Mammary epithelial cell (primary cell): ENCODE measurements at regions of chr3 and their contacts with region 1.

Region 1: GRCh38 chr3:183766745-183767606 is 58.4 kb downstream of the MAP6D1 start:
- DNase-seq: peak; percentile 68
- H3K4me3 ChIP-seq: no peak overlapping the region
- H3K27ac ChIP-seq: no peak overlapping the region
- H3K4me1 ChIP-seq: peaks cover 16% of the 10 kb centered on the region
- H3K27me3 ChIP-seq: no peaks in the 10 kb centered on the region
- CTCF ChIP-seq: peak; percentile 60 to 82

Region 2: DNA sequence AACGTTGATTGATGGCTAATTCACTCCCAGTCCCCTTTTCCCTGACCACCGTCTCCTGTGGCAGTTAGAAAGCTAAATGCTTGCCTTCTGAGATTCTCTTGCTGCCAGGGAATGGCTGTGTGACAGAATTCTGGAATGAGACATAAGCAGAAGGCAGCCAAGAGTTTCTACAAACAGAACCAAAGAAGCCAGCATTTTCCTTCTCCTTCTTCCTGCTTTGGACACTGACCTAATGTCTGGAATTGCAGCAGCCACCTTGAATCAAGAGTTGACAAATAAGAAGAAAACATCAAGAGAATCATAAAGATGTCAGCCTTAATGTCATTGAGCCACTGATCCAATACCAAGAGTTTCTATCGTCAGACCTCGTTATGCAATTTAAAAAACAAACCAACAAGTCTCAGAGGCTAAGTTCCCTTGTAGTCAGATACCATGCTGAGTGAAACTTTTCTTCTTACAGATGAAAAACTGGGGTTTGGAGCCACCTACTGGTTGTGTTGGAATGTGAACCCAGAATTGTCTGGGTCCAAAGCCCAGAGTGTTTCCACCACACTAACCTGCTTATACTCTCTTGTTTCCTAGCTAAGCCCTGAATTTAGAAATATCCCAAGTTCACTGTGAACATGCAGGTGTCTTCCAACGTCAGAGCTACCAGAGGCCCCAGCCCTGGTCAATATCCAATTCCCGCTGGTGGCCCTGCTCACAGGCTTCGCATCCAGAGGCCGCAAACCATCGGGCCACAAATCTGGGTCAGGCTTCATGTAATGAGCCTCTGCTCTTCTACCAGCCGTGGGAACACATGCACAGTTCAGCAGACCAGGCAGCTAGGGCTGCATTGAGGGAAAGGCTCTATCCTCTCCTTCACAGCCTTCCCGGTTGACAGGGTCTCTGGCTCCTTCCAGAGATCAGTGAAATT is 381.0 kb before region 1 on chr3:
- CTCF ChIA-PET with region 1: no interaction called
- dilution Hi-C with region 1: no loop called
- in situ Hi-C with region 1: no loop called
- intact Hi-C with region 1: loop called (anchors 5 kb)
- DNase-seq: peak; percentile 59
- H3K4me3 ChIP-seq: no peak overlapping the region
- H3K27ac ChIP-seq: no peak overlapping the region
- H3K4me1 ChIP-seq: peaks cover 8% of the 10 kb centered on the region
- H3K27me3 ChIP-seq: no peaks in the 10 kb centered on the region
- CTCF ChIP-seq: peak; percentile 72 to 80

Region 3: DNA sequence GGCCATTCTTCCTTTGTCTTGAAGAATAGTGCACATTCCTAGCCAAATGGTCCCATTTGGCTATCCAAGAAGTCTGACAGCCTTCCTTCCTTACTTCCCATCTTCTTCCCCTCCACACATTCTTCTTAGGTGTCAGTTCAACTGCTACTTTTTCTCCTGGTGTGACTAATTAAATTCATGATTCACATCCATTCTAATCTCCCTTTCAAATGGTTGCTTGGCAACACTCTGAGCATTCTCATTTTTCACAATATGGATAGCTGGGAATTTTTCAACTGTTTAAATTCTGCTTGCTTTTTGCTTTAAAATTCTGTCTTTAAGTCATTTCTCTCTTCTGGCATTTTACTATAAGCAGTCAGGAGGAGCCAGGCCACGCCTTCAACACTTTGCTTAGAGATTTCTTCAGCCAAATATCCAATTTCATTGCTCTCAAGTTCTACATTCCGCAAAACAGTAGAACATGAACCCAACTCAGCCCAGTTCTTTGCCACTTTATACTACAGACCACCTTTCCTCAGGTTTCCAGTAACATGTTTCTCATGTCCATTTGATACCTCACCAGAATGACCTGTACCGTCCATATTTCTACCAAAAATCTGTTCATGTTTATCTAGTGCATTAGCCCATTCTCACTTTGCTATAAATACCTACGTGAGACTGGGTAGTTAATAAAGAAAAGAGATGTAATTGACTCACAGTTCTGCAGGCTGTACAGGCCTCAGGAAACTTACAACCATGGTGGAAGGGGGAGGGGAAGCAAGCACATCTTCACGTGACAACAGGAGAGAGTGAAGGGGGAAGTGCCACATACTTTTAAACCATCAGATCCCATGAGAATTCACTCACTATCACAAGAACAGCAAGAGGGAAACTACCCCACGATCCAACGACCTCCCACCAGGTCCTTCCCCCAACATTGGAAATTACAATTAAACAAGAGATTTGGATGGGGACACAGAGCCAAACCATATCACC is 306.6 kb before region 1 on chr3:
- CTCF ChIA-PET with region 1: no interaction called
- dilution Hi-C with region 1: no loop called
- in situ Hi-C with region 1: loop called (anchors 5 to 10 kb)
- intact Hi-C with region 1: no loop called
- DNase-seq: peak; percentile 49
- H3K4me3 ChIP-seq: no peak overlapping the region
- H3K27ac ChIP-seq: no peak overlapping the region
- H3K4me1 ChIP-seq: peaks cover 6% of the 10 kb centered on the region
- H3K27me3 ChIP-seq: no peaks in the 10 kb centered on the region
- CTCF ChIP-seq: no peak

Region 4: DNA sequence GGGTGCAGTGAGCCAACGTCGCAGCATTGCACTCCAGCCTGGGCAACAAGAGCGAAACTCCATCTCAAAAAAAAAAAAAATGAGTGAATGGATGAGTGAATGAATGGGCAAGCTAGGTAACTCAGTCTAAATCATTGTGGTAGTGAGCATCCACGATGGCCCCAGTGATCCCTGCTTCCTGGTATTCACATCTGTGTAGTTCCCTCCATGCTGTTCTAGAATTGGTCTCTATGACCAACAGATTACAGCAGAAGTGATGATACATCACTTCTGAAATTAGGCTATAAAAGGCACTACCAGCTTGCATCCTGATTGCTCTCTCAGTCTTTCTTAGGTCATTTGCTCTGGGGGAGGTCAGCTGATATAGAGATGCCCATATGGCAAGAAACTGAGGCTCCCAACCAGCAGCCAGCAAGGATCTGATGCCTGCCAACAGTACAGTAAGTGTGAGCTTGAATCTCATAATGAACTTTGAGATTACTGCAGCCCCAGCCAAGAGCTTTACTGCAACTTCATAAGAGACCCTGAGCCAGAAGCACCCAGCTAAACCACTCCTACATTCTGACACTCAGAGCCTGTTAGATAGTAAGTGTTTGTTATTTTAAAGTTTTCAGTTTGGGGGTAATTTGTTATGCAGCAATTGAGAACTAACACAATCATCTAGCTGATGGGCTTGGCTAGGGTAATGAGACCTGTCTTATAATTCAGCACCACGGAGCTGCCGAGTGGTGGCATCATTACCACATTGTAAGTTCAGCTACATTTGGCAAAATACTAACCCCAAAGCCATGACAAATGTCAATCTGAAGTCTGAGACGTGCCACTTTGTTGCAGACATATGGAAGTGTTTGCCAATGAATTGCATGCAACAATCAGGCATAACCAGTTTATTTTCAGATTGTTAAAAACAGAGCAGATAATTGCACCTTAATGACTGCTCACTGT is 264.5 kb before region 1 on chr3:
- CTCF ChIA-PET with region 1: no interaction called
- dilution Hi-C with region 1: no loop called
- in situ Hi-C with region 1: no loop called
- intact Hi-C with region 1: loop called (anchors 1 kb)
- DNase-seq: no peak
- H3K4me3 ChIP-seq: no peak overlapping the region
- H3K27ac ChIP-seq: no peak overlapping the region
- H3K4me1 ChIP-seq: no peaks in the 10 kb centered on the region
- H3K27me3 ChIP-seq: no peaks in the 10 kb centered on the region
- CTCF ChIP-seq: peak; percentile 8 to 38

Region 5: DNA sequence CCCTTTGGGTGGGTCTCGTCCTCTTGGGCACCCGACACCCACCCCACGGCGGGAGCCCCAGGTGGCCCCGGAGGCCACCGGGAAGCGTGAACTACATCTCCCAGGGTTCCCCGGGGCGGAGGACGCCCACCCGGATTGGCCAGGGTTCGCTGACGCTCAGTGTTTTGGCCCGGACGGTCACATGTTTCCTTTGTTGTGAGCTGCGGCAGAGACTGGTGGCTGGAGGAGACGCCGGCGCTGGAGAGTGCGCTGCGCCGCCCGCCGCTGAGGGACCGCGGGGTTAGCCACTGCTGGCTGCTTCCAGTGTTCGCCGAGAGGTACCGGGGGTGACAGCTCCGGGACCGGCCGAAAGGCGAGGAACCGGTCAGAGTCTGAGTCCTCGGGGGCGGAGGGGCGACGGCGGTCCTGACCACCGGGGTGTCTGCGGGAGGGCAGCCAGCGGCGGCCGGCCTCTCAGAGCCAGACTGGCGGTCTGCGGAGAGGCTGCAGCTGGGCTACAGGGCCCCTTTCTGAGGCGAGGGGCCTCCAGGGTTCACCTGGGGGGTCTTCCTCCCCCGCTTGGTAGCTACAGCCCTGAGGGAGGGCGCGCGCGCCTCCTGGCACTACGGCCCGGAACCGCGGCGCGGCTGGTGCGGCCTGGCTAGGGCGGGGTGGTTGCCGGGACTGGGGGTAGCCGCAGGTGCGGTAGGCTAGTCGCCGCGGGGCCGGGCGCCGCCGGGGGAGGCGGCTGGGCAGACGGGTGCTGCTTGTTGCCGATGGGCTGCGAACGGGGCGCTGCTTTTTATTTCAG is 131.3 kb before region 1 on chr3 and contains the start of gene KLHL24:
- CTCF ChIA-PET with region 1: no interaction called
- dilution Hi-C with region 1: no loop called
- in situ Hi-C with region 1: no loop called
- intact Hi-C with region 1: loop called (anchors 5 kb)
- DNase-seq: peak; percentile 88
- H3K4me3 ChIP-seq: peak within 1 kb of the TSS; percentile 79 to 98 (median 94)
- H3K27ac ChIP-seq: peak within 1 kb of the TSS; percentile 62
- H3K4me1 ChIP-seq: peaks cover 4% of the 10 kb centered on the region
- H3K27me3 ChIP-seq: no peaks in the 10 kb centered on the region
- CTCF ChIP-seq: no peak
- total RNA-seq, gene KLHL24: 10.2 to 100 TPM

Region 6: GRCh38 chr3:183815563-183815940 is 48.6 kb after region 1 on chr3:
- CTCF ChIA-PET with region 1: no interaction called
- dilution Hi-C with region 1: no loop called
- in situ Hi-C with region 1: no loop called
- intact Hi-C with region 1: no loop called
- DNase-seq: no peak
- H3K4me3 ChIP-seq: no peak overlapping the region
- H3K27ac ChIP-seq: no peak overlapping the region
- H3K4me1 ChIP-seq: peaks cover 23% of the 10 kb centered on the region
- H3K27me3 ChIP-seq: no peaks in the 10 kb centered on the region
- CTCF ChIP-seq: no peak